H1 (cell line): ENCODE measurements at regions of chr17 and their contacts with region 1.

Region 1: DNA sequence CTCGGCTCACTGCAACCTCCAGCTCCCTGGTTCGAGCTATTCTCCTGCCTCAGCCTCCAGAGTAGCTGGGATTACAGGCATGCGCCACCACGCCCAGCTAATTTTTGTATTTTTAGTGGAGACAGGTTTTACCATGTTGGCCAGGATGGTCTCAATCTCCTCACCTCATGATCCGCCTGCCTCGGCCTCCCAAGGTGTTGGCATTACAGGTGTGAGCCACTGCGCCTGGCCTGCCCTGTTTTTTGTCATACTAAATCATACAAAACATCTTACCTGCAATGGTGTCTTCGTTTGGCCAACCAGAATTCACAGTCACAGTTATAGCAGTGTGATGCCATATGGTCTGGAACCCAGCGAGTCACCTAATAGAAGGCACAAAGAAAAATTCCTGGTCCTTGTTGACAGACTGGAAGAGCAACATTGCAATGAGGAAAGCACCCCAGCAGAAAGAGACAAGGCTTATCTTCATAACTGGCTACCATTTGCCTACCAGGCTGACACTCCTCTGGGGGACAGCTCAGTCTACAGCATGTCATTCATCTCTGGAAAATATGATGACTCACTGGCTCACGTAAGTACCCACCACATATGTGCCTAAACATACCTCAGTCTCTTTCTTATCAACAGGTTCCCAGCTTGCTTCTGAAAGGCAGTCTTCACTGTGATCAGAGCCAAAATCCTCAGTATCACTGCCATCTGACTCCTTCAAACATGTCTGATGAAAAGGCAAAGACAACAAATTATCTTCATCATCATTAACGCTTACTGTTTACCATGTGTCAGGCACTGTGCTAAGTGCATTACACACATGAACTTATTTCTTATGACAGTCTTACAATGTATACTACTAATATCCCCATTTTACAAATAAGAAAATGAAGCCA is 4.3 kb upstream of the HSF5 start:
- DNase-seq: peak in 1 of 2 experiments; percentile 6
- H3K4me3 ChIP-seq: no peak overlapping the region
- H3K27ac ChIP-seq: no peak overlapping the region
- H3K4me1 ChIP-seq: no peaks in the 10 kb centered on the region
- H3K27me3 ChIP-seq: no peaks in the 10 kb centered on the region
- CTCF ChIP-seq: no peak
- EP300 ChIP-seq: no peak
- POLR2A ChIP-seq: no peak
- RAD21 ChIP-seq: no peak

Region 2: DNA sequence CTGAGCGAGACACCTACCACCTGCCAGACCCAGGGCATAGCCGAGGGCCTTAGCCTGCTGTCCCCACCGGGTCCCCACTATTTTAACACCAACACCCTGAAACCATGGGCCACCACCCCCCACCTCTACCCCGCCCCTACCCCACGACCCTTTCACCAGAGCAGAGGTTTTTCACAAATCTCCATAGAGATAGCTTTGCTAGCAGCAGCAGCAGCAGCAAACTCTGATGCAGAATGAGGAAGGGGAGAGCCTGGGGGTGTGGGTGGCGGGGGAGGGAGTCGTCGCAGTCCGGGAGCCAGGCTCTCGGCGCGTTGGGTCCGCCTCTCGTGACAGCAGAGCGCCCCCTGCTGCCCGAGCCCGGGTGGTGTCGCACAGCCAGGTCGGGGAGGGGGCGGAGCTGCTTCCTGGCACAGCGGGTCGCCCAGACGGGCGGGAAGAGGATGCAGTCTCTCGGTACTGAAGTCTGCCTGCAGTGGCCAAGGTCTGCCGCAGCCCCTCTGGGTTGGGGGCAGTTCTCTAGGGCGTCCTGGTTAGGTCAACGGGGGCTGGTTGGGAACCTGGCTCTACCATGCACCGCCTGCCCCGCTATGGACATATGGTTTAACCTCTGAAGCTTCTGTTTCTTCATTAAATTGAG is 709.3 kb before region 1 on chr17:
- CTCF ChIA-PET with region 1: no interaction called
- POLR2A ChIA-PET with region 1: no interaction called
- DNase-seq: peak; percentile 70 to 99
- H3K4me3 ChIP-seq: peak overlapping the region in 1 of 4 experiments; percentile 45; a peak in 2 of 8 replicates
- H3K27ac ChIP-seq: no peak overlapping the region
- H3K4me1 ChIP-seq: peaks cover 5 to 12% (median 8%) of the 10 kb centered on the region in 4 experiments; a peak in 6 of 7 replicates
- H3K27me3 ChIP-seq: peaks cover 0 to 13% (median 7%) of the 10 kb centered on the region in 4 experiments; a peak in 6 of 7 replicates
- CTCF ChIP-seq: peak; percentile 88 to 94 (median 94)
- EP300 ChIP-seq: peak; percentile 33 to 63; a peak in 2 of 3 replicates
- POLR2A ChIP-seq: no peak
- RAD21 ChIP-seq: peak; percentile 81 to 83

Region 3: GRCh38 chr17:58504826-58505521 is 12.5 kb after region 1 on chr17:
- CTCF ChIA-PET with region 1: no interaction called
- POLR2A ChIA-PET with region 1: interaction called, 10 read pairs
- DNase-seq: no peak
- H3K4me3 ChIP-seq: no peak overlapping the region
- H3K27ac ChIP-seq: no peak overlapping the region
- H3K4me1 ChIP-seq: no peaks in the 10 kb centered on the region
- H3K27me3 ChIP-seq: no peaks in the 10 kb centered on the region
- CTCF ChIP-seq: no peak
- EP300 ChIP-seq: no peak
- POLR2A ChIP-seq: no peak
- RAD21 ChIP-seq: no peak